Lower leg skin (tissue), 4 donors: ENCODE measurements at regions of chr11 and their contacts with region 1.

Region 1: GRCh38 chr11:75705541-75705940 is 12.1 kb upstream of the MOGAT2 start:
- DNase-seq: no peak
- H3K4me3 ChIP-seq: no peak overlapping the region
- CTCF ChIP-seq: no peak
- POLR2A ChIP-seq: no peak

Region 2: GRCh38 chr11:75771646-75772410 is 66.3 kb after region 1 on chr11:
- intact Hi-C with region 1: loop called (anchors 2 kb)
- DNase-seq: no peak
- H3K4me3 ChIP-seq: no peak overlapping the region
- CTCF ChIP-seq: no peak
- POLR2A ChIP-seq: no peak

Region 3: DNA sequence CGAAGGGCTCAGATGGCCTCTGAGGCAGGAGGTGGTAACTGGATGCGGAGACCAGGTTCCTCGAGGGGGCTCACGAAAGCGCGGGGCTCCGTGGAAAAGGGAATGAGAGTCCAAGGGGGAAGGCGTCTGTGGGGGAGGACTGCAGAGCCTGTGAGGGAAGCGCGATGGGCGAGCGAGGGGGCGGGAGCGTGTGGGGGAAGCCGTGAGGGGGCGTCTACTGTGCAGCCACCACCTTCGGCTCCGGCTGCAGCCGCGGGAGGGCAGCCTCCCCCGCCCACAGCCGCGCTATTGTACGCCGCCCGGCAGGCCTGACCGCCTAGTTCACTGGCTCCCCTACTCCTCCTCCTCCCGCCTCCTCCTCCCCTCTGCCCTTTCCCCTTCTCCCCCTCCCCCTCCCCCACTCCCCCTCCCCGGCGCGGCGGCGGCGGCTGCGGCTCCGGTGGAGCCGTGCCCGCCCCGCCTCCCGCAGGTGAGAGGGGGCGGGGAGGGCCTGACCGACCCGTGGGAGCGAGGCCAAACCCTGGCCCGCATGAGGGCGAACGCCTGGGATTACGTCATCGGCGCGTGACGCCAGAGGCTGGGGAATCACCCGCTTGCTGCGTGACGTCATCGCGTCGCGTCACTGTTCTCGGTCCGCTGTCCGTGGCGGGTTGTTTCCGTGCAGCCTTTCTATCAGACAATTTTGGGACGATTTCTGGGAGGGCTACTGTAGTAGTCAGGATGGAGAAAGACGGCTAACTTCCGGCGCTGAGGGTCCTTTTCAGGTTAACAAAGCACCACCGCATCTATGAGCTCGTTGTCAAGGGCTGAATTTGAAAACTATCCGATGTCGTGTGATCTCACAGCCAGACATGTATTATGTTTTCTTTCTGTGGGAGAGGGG is 1768.5 kb after region 1 on chr11 and contains the start of gene PAK1:
- intact Hi-C with region 1: no loop called
- DNase-seq: peak; percentile 73 to 97
- H3K4me3 ChIP-seq: peak within 1 kb of the TSS; percentile 42
- CTCF ChIP-seq: no peak
- POLR2A ChIP-seq: no peak
- total RNA-seq, gene PAK1: 17.8 to 34.5 (median 21.6) TPM